ENCODE measurements at regions of chr1 and their contacts with region 1.

Region 1: DNA sequence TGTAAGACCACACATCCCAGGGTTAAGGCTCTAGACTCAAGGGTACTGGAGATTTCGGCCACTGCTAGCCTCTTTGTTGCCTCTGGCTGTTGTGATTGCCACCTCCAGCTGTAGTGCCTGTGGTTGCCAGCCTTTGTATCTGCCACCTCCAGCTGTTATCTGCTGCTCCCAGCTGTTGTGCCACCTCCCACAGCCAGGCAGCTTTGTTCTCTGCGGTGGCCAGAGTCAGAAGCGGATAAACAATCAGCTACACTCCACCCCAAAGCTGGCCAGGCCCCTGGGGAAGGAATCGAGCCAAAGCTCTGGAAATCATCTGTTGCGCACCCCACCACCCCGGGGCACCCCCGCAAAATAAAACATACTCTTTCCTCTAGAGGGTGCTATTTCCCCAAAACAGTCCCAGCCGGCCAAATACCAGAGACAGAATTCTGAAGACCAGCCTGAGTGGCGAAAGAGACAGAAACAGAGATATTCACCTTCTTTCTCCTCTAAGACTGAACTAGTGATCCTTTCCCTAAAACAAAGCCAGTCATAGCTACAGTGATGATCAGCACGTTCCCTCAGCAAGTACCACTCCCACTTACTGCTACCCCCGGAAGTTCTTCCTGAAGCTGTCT is 14.8 kb upstream of the PIGM start:
- DNase-seq: peak in 1 of 2 experiments; percentile 76
- H3K4me3 ChIP-seq: peak overlapping the region in 1 of 4 experiments; percentile 14; a peak in 2 of 8 replicates
- H3K27ac ChIP-seq: no peak overlapping the region
- H3K4me1 ChIP-seq: peaks cover 10 to 24% (median 16%) of the 10 kb centered on the region in 4 experiments
- H3K27me3 ChIP-seq: no peaks in the 10 kb centered on the region; a peak in 1 of 7 replicates
- CTCF ChIP-seq: peak; percentile 45 to 76 (median 69)
- EP300 ChIP-seq: peak in 1 of 2 experiments; percentile 17; a peak in 2 of 3 replicates
- POLR2A ChIP-seq: no peak
- RAD21 ChIP-seq: peak; percentile 71 to 80

Region 2: DNA sequence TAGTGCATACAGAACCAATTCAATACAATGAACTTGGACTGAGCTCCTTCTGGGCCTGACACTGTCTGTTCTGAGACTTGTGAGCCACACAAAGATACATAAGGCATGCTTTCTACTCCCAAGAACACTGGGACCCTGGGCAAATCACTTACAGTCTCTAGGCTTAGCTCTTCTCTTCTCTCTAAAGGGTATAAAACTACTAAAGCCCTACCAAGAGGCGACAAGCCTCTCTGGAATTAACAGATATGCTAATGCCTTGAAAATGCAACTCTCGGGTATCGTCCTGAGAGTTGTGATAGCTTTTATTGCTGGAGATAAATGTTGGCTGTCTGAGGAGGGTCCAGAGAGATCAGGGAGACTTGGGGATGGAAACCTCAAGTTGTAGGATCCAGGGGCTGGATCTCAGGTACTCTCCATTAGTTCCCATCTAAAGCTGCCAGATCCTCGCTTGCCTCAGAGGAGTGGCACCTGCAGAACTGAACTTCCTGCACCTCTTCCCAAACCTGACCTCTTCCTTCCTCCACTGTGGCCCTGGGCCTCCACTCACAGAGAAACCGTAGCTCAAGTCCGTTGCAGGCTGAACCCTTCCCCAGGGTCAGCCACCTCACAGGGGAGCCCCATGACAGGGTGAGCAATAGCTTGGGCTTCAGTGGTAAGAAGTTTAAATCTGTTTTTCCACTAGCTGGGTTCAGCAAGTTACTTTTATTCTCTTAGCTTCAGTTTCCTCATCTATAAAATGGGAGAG is 135.1 kb before region 1 on chr1:
- CTCF ChIA-PET with region 1: no interaction called
- POLR2A ChIA-PET with region 1: no interaction called
- DNase-seq: no peak
- H3K4me3 ChIP-seq: no peak overlapping the region
- H3K27ac ChIP-seq: no peak overlapping the region; the same call in 1 of the 2 replicates
- H3K4me1 ChIP-seq: peaks cover 14 to 36% (median 25%) of the 10 kb centered on the region in 4 experiments
- H3K27me3 ChIP-seq: no peaks in the 10 kb centered on the region; a peak in 1 of 7 replicates
- CTCF ChIP-seq: no peak
- EP300 ChIP-seq: no peak
- POLR2A ChIP-seq: no peak
- RAD21 ChIP-seq: no peak

Region 3: GRCh38 chr1:160018347-160018746 is 28.3 kb before region 1 on chr1:
- CTCF ChIA-PET with region 1: no interaction called
- POLR2A ChIA-PET with region 1: no interaction called
- DNase-seq: no peak
- H3K4me3 ChIP-seq: no peak overlapping the region
- H3K27ac ChIP-seq: no peak overlapping the region
- H3K4me1 ChIP-seq: no peaks in the 10 kb centered on the region
- H3K27me3 ChIP-seq: no peaks in the 10 kb centered on the region
- CTCF ChIP-seq: no peak
- EP300 ChIP-seq: no peak
- POLR2A ChIP-seq: no peak
- RAD21 ChIP-seq: no peak

Region 4: DNA sequence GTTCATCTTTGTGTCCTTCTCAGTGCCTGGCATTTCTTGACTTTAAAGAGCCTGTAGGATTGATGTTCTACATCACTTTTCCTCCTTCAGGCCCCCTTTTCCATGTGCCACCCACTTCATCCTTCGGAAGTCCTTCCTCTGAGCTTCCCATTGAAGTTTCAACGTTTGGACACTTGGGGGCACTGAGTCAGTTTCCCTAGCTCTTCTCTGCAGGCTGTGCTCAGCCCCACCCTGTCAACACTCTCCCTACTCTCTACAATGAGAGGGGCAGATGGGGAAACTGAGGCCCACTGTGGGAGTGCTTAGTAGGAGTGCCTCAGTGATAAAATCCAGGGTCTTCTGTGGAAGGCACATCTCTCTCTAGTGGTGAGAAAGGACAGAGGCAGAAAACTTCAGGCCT is 11.5 kb after region 1 on chr1:
- CTCF ChIA-PET with region 1: interaction called, 1,874 read pairs
- POLR2A ChIA-PET with region 1: interaction called, 11 read pairs
- DNase-seq: no peak
- H3K4me3 ChIP-seq: no peak overlapping the region
- H3K27ac ChIP-seq: no peak overlapping the region
- H3K4me1 ChIP-seq: peaks cover 0 to 17% (median 12%) of the 10 kb centered on the region in 4 experiments; a peak in 6 of 7 replicates
- H3K27me3 ChIP-seq: peaks cover 0 to 4% (median 1%) of the 10 kb centered on the region in 4 experiments; a peak in 3 of 7 replicates
- CTCF ChIP-seq: peak; percentile 40 to 60 (median 52)
- EP300 ChIP-seq: no peak
- POLR2A ChIP-seq: no peak
- RAD21 ChIP-seq: peak; percentile 45 to 61

Region 5: DNA sequence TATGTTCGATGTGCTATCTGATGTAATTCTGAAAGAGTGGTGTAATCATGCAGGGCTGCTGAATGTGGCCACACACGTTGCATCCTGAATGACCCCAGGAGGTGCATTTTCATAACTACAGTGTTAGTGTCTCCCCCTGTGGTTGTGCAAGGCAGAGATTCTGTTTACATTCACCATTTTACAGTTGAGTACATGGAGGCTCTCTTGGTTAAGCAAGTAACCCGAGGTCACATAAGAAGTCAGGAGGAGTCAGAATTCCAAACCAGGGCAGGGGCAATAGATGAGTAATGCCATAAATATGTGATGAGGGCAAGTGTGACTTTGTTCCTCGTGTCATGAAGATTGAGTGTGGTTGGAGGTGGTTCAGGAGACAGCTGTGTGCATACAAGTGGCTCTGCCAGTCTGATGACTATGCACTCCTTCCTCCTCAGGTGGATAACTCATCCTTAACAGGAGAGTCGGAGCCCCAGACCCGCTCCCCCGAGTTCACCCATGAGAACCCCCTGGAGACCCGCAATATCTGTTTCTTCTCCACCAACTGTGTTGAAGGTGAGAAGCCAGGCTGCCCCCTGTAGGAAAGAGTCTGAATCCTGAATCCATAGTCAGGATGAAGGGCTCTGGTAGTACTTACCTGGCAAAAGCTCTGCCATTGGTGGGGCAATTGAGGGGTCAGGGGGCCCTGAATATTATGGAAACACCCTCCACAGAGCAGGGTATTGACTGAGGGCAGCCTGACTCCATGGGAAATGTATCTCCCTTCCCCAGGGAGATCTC is 78.3 kb after region 1 on chr1:
- CTCF ChIA-PET with region 1: no interaction called
- POLR2A ChIA-PET with region 1: no interaction called
- DNase-seq: no peak
- H3K4me3 ChIP-seq: no peak overlapping the region
- H3K27ac ChIP-seq: no peak overlapping the region
- H3K4me1 ChIP-seq: peaks cover 0 to 6% (median 0%) of the 10 kb centered on the region in 4 experiments; a peak in 2 of 7 replicates
- H3K27me3 ChIP-seq: no peaks in the 10 kb centered on the region
- CTCF ChIP-seq: peak in 2 of 3 experiments; percentile 25 to 39; a peak in 3 of 4 replicates
- EP300 ChIP-seq: no peak
- POLR2A ChIP-seq: no peak
- RAD21 ChIP-seq: peak; percentile 30 to 47; a peak in 3 of 4 replicates